ENCODE measurements at regions of chr17 and their contacts with region 1.

Region 1: GRCh38 chr17:60142872-60143499 is 6.8 kb upstream of the CA4 start:
- DNase-seq: peak; percentile 73 to 95 (median 87)

Region 2: GRCh38 chr17:60435244-60436167 is 292.5 kb after region 1 on chr17:
- intact Hi-C with region 1: loop called (anchors 10 kb)
- DNase-seq: peak in 40 of 42 donors; percentile 22 to 93 (median 79)